Calu3 (cell line): ENCODE measurements at regions of chr11 and their contacts with region 1.

Region 1: GRCh38 chr11:78365381-78365792 is 52.2 kb downstream of the GAB2 start:
- DNase-seq: peak; percentile 61
- H3K4me3 Mint-ChIP-seq: no peak overlapping the region
- H3K27ac Mint-ChIP-seq: no peak overlapping the region
- H3K4me1 Mint-ChIP-seq: peaks cover 13% of the 10 kb centered on the region
- H3K27me3 Mint-ChIP-seq: no peaks in the 10 kb centered on the region
- CTCF ChIP-seq: no peak

Region 2: DNA sequence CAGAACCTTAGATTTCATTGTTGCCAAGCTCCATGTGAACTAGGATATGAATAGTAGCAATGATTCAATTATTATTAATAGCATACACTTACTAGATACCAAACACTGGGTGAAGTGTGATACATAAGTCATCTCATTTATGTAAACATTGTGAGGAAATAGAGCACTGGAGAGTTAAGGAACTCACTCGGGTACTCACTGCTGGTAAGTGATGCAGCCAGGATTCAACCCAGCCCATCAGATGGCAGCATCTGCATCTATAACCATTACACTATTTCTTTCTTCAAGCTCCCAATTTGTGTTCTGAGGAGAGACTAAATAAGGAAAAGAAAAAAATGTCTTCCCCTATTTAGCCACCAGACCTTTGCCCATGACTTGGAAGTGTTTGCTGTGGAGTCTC is 215.7 kb before region 1 on chr11:
- CTCF ChIA-PET with region 1: no interaction called
- intact Hi-C with region 1: loop called (anchors 10 kb)
- DNase-seq: no peak
- H3K4me3 Mint-ChIP-seq: no peak overlapping the region
- H3K27ac Mint-ChIP-seq: no peak overlapping the region
- H3K4me1 Mint-ChIP-seq: no peaks in the 10 kb centered on the region
- H3K27me3 Mint-ChIP-seq: no peaks in the 10 kb centered on the region
- CTCF ChIP-seq: no peak

Region 3: DNA sequence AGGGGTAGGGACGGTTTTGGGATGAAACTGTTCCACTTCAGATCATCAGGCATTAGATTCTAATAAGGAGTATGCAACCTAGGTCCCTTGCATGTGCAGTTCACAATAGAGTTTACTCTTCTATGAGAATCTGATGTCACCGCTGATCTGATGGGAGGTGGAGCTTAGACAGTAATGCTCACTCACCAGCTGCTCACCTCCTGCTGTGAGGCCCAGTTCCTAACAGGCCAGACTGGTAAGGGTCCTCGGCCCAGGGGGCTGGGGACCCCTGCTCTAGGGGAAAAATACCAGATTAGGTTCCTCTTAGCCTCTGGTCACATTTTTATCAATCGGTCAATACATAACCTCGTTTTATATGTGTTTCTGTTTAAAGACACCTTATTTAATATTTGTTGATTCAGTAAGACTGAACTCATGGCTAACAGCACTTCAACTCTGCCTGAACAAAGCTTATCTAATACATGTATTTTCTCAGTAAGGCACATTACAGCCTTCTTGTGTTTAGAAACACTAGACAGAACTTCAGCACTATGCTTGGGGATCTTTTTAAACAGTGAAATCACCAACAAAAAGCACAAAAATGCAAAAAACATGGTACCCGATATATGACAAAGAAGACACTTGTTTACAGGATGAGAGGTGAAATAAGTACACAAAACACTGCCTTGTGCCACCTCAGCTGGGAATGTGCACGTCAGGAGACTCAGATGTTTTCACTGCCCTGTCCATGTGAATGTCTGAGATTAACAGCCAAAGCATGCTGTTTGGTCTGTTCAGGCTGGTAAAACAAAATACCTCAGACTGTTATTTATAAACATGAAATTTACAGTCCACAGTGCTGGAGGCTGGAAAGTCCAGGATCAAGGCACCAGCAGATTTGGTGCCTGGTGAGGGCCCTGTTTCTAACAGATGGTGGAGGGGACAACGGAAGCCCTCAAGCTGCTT is 69.1 kb before region 1 on chr11:
- CTCF ChIA-PET with region 1: no interaction called
- intact Hi-C with region 1: loop called (anchors 5 kb)
- DNase-seq: peak; percentile 7
- H3K4me3 Mint-ChIP-seq: no peak overlapping the region
- H3K27ac Mint-ChIP-seq: no peak overlapping the region
- H3K4me1 Mint-ChIP-seq: peaks cover 14% of the 10 kb centered on the region
- H3K27me3 Mint-ChIP-seq: no peaks in the 10 kb centered on the region
- CTCF ChIP-seq: no peak

Region 4: GRCh38 chr11:78338138-78338537 is 27.2 kb before region 1 on chr11:
- CTCF ChIA-PET with region 1: no interaction called
- intact Hi-C with region 1: no loop called
- DNase-seq: no peak
- H3K4me3 Mint-ChIP-seq: no peak overlapping the region
- H3K27ac Mint-ChIP-seq: no peak overlapping the region
- H3K4me1 Mint-ChIP-seq: no peaks in the 10 kb centered on the region
- H3K27me3 Mint-ChIP-seq: no peaks in the 10 kb centered on the region
- CTCF ChIP-seq: no peak